Activated T-helper 2 cell treated with anti-CD3 and anti-CD28 coated beads, Interferon-gamma antibody, Interleukin-2, Interleukin-4, amounts not matched to agents 10 μg/mL and 5 μg/mL and 100 μg/mL, durations not matched to agents 14 hours and 24 hours and 36 hours (primary cell): ENCODE measurements at regions of chr20 and their contacts with region 1.

Region 1: DNA sequence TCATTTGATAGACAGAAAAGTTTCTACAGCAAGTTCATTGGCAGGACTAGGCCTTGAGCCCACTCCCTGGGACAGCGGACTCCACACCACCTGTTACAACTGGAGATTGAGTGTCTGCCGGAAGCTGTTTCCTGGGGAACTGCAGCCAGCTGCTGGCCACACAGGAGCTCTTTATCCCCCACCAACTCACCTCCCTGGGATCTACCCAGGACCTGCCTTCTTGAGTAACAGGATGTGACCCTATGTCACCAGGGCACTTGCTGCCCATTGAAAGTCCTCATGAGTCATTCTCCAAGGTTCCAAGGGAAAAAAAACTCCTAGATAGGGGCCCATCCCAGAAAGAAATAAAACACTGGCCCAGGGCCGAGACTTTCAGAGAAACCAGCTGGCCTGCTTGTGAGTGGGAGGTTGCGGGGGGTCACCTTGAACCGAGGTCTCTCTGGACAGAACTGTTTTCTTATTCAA is 37.4 kb upstream of the SLC9A8 start:
- DNase-seq: no peak
- H3K4me3 Mint-ChIP-seq: no peak overlapping the region
- H3K27ac Mint-ChIP-seq: no peak overlapping the region
- H3K4me1 Mint-ChIP-seq: peaks cover 34% of the 10 kb centered on the region
- H3K27me3 Mint-ChIP-seq: peaks cover 2% of the 10 kb centered on the region

Region 2: GRCh38 chr20:49794336-49795138 is 19.3 kb after region 1 on chr20:
- intact Hi-C with region 1: loop called (anchors 2 kb)
- DNase-seq: peak; percentile 29
- H3K4me3 Mint-ChIP-seq: peak overlapping the region; percentile 33
- H3K27ac Mint-ChIP-seq: peak overlapping the region; percentile 52
- H3K4me1 Mint-ChIP-seq: peaks cover 32% of the 10 kb centered on the region
- H3K27me3 Mint-ChIP-seq: no peaks in the 10 kb centered on the region

Region 3: GRCh38 chr20:49835031-49835430 is 59.8 kb after region 1 on chr20:
- intact Hi-C with region 1: no loop called
- DNase-seq: no peak
- H3K4me3 Mint-ChIP-seq: no peak overlapping the region
- H3K27ac Mint-ChIP-seq: no peak overlapping the region
- H3K4me1 Mint-ChIP-seq: peaks cover 8% of the 10 kb centered on the region
- H3K27me3 Mint-ChIP-seq: no peaks in the 10 kb centered on the region

Region 4: GRCh38 chr20:49901588-49901987 is 126.3 kb after region 1 on chr20:
- intact Hi-C with region 1: no loop called
- DNase-seq: no peak
- H3K4me3 Mint-ChIP-seq: no peak overlapping the region
- H3K27ac Mint-ChIP-seq: no peak overlapping the region
- H3K4me1 Mint-ChIP-seq: peaks cover 3% of the 10 kb centered on the region
- H3K27me3 Mint-ChIP-seq: no peaks in the 10 kb centered on the region

Region 5: GRCh38 chr20:49989234-49990065 is 214.2 kb after region 1 on chr20:
- intact Hi-C with region 1: no loop called
- DNase-seq: no peak
- H3K4me3 Mint-ChIP-seq: no peak overlapping the region
- H3K27ac Mint-ChIP-seq: no peak overlapping the region
- H3K4me1 Mint-ChIP-seq: peaks cover 1% of the 10 kb centered on the region
- H3K27me3 Mint-ChIP-seq: peaks cover 6% of the 10 kb centered on the region